Right ventricle myocardium inferior (tissue), 1 donor: ENCODE measurements at regions of chr11 and their contacts with region 1.

Region 1: GRCh38 chr11:62705880-62706849 is 1.1 kb downstream of the BSCL2 start:
- DNase-seq: peak; percentile 98
- ATAC-seq: peak; percentile 88

Region 2: GRCh38 chr11:61071208-61071681 is 1634.9 kb before region 1 on chr11:
- intact Hi-C with region 1: no loop called
- DNase-seq: no peak
- ATAC-seq: no peak

Region 3: DNA sequence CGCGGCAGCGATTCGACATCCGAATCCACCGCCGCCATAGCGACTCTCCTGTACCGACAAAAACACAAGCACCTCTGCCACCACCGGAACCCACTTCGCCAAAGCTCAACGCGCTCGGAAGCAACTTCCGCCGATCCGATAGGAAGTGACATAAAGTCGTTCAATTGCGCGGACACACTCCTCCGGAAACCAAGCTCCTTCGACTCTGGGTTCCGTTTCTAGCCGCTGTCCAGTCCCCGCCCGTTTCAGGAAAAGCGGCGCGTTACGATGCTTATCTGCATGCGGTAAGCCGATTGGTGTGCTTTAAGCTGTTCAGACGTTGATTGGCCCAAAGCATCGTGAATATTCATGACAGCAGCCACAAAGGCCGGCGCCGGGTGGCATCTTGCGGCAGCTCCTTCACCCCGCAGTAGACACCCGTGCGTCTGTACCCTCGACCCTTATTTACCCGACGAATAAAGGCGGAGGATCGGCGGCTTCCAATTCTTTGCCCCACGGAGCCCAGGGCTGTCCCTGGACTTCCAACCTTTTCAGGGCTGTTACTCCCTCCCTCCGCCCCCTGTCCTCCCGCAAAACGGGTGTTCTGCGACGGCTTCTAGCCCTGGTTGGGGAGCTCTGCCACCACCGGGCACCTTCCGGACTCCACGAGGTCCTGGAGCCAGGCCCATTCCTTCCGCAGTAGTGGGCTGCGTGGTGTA is 114.6 kb before region 1 on chr11 and contains the start of gene TUT1:
- intact Hi-C with region 1: loop called (anchors 10 kb)
- DNase-seq: peak; percentile 98
- ATAC-seq: peak; percentile 96
- total RNA-seq, gene TUT1: 13.7 TPM

Region 4: GRCh38 chr11:62665075-62665598 is 41.0 kb before region 1 on chr11 and contains the starts of genes C11orf98 and CSKMT:
- intact Hi-C with region 1: loop called (anchors 5 kb)
- DNase-seq: peak; percentile 98
- ATAC-seq: peak; percentile 98
- total RNA-seq, gene C11orf98: 33.0 TPM
- total RNA-seq, gene CSKMT: 4.9 TPM

Region 5: GRCh38 chr11:62678770-62679696 is 27.1 kb before region 1 on chr11 and contains the start of gene UBXN1:
- intact Hi-C with region 1: no loop called
- DNase-seq: peak; percentile 95
- ATAC-seq: peak; percentile 89
- total RNA-seq, gene UBXN1: 88.9 TPM

Region 6: DNA sequence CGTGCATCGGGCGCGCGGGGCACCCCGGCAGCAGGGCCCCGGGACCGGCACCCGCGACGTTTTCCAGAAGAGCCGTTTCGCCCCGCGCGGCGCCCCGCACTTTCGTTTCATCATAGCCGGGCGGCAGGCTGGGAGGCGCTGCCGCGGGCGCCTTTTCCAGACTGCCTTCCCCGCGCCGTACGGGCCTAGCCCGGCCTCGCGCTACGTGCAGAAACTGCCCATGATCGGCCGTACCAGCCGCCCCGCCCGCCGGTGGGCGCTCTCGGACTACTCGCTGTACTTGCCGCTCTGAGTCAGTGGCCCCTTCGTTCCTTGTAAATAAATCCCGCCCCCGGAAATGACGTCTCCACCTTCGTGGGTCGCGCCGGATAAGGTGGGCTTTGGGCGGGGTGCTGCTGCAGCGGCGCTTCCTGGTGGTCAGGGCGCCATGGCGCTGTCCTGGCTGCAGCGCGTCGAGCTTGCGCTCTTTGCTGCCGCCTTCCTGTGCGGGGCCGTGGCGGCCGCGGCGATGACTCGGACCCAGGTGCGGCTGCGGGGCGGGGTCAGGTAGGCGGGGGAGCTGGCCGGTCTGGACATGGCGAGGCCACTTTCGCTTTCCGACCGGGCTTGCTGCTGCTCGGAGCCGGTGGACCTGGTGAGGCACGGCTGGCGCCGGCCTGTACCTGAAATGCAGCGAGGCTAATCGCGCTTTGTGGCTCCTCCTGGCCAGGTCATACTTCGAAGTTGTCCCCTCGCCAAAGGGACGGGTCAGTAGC is 81.0 kb after region 1 on chr11 and contains the start of gene TMEM179B:
- intact Hi-C with region 1: loop called (anchors 2 kb)
- DNase-seq: peak; percentile 99
- ATAC-seq: peak; percentile 88
- total RNA-seq, gene TMEM179B: 21.6 TPM

Region 7: GRCh38 chr11:62841361-62842184 is 135.4 kb after region 1 on chr11:
- intact Hi-C with region 1: loop called (anchors 2 kb)
- DNase-seq: peak; percentile 90
- ATAC-seq: peak; percentile 79